SK-N-SH (cell line): ENCODE measurements at regions of chr1 and their contacts with region 1.

Region 1: GRCh38 chr1:159780583-159781582 is at the start of gene DUSP23:
- DNase-seq: peak; percentile 98
- H3K4me3 ChIP-seq: peak within 1 kb of the TSS; percentile 75 to 87
- H3K27ac ChIP-seq: peak within 1 kb of the TSS in 1 of 2 experiments; percentile 58; a peak in 2 of 4 replicates
- H3K4me1 ChIP-seq: peaks cover 0 to 20% of the 10 kb centered on the region in 2 experiments; a peak in 2 of 4 replicates
- H3K27me3 ChIP-seq: no peaks in the 10 kb centered on the region
- CTCF ChIP-seq: peak; percentile 86
- EP300 ChIP-seq: 0 out of 4 replicates have a peak, but pooled peaks of 1 of the 2 experiments have one; percentile 48
- RAD21 ChIP-seq: peak; percentile 87
- polyA plus RNA-seq, gene DUSP23: 41.2 and 44.3 TPM in 2 replicates

Region 2: GRCh38 chr1:159821171-159821867 is 40.4 kb after region 1 on chr1:
- CTCF ChIA-PET with region 1: interaction called, 12 read pairs
- POLR2A ChIA-PET with region 1: no interaction called
- DNase-seq: peak; percentile 53
- H3K4me3 ChIP-seq: no peak overlapping the region
- H3K27ac ChIP-seq: no peak overlapping the region
- H3K4me1 ChIP-seq: peaks cover 0 to 24% of the 10 kb centered on the region in 2 experiments; a peak in 1 of 4 replicates
- H3K27me3 ChIP-seq: no peaks in the 10 kb centered on the region
- CTCF ChIP-seq: peak; percentile 65
- EP300 ChIP-seq: no peak
- RAD21 ChIP-seq: peak; percentile 55

Region 3: DNA sequence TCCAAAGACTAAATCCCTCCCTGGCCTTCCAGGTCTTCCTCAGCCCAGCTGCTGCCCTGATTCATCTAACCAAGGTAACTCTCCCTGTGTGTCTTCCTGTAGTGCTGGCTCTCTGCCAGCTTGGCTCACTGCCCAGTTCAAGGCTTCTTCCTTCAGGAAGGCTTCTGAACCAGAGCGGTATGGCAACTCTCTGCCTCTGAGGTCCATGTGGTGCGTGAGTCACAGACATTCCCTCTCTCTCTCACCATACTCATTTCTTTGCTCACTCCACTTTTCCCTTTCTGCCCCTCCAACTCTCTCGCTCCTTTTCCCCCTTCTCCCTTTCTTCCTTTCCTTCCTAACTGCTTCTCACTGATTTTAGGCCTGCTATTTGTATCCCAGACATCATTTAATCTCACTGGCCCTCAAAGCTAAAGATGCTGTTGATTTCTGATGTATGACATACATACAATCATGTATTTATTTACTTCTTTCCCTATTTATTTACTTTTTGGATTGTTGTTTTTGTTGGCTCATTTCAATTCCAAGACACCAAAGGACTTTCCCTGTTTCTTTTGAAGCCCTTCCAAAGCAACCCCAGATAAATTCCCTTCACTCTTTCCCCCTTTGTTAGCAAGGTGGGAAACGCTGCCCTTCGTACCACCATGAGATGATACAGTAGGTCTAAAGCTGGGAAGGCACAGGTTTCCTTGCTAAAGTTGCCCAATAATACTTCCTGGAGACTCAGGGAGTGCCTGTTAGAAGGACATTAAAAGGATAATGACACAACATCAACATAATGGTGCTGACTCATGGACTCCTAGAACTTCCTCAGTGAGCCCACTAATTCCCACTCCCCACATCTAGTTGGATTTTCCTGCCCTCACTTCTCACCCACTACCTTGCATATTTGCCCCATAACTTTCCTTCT is 101.3 kb after region 1 on chr1:
- CTCF ChIA-PET with region 1: interaction called, 533 read pairs
- POLR2A ChIA-PET with region 1: no interaction called
- DNase-seq: peak; percentile 33
- H3K4me3 ChIP-seq: no peak overlapping the region
- H3K27ac ChIP-seq: peak overlapping the region; percentile 54 to 79; a peak in 3 of 4 replicates
- H3K4me1 ChIP-seq: peaks cover 12 to 14% of the 10 kb centered on the region in 2 experiments; a peak in 2 of 4 replicates
- H3K27me3 ChIP-seq: no peaks in the 10 kb centered on the region
- CTCF ChIP-seq: no peak
- EP300 ChIP-seq: peak in 1 of 2 experiments; percentile 76; a peak in 1 of 4 replicates
- RAD21 ChIP-seq: no peak